IMR-90 (cell line): ENCODE measurements at regions of chr1 and their contacts with region 1.

Region 1: DNA sequence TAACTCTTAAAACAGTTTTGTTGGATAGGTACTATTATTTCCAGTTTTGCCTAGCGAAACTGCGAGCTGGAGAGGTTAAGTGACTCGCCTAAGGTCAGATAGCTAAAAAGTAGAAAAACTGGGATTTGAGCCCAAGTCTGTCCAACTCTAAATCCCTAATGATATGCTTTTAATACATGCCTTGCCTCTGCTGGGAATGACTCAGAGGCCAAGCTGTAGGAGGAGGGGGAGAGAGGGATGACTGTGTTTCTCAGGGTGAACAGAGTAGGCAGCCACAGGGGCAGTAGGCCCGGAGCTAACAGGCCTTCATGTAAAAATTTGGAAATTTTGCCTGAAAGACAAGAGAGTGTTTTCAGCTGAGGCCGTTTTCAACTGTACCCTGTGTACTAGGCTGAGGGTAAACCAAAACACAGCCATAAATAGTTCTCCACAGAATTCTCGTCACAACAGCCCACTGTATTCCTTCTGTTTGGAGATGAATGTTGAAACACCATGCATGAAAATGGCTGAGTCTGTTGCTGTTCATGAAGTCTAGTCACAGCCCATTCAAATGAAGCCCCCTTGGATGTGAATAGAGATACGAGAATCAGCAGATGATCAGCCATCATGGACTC is 107.5 kb upstream of the HOOK1 start:
- DNase-seq: peak; percentile 98
- ATAC-seq: peak; percentile 85
- H3K4me3 ChIP-seq: no peak overlapping the region
- H3K27ac ChIP-seq: peak overlapping the region; percentile 92
- H3K4me1 ChIP-seq: peaks cover 29% of the 10 kb centered on the region
- H3K27me3 ChIP-seq: no peaks in the 10 kb centered on the region
- CTCF ChIP-seq: no peak
- POLR2A ChIP-seq: no peak
- RAD21 ChIP-seq: peak; percentile 18; the same call in 1 of the 2 replicates

Region 2: DNA sequence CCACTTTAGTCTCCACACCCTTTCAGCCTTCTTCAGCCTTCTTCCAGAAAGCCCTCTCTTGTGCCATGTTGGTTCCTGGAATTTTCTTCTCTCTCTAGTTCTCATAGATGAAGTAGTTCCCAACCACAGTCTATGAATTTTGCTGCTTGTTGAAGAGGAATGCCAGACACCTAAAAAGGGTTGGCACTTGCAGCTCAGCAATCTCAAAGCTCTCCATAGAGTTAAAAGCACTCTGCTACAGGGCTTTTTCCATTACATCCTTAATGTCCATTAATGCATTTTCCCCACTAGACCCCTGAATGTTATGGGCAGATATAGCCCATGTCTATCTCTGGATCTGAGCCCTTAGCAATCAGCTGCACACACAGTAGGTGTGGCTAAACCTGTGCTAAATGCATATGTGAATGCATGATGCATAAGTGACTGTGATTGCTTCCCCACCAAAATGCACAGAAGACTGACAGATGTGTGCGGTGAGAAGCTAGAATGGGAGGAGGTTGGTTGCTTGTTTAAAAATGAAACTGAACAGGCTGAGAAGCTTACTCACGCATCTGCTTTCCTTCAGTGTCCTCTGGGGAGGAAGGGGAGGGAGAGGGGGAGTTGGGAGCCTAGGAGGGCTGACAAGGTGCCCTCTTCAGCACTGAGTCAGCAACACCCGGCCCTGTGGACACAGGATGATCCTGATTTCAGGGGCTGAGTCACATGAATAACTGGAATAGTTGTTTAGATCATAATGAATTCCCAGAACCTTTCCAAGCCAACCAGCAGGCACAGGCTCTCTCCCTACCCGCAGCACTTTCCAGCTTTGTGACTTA is 556.5 kb before region 1 on chr1:
- CTCF ChIA-PET with region 1: no interaction called
- POLR2A ChIA-PET with region 1: no interaction called
- dilution Hi-C with region 1: no loop called
- in situ Hi-C with region 1: loop called (anchors 5 kb)
- intact Hi-C with region 1: loop called (anchors 5 kb)
- DNase-seq: peak; percentile 100
- ATAC-seq: peak; percentile 94
- H3K4me3 ChIP-seq: peak overlapping the region; percentile 23; the same call in 1 of the 2 replicates
- H3K27ac ChIP-seq: peak overlapping the region; percentile 94
- H3K4me1 ChIP-seq: peaks cover 24% of the 10 kb centered on the region
- H3K27me3 ChIP-seq: no peaks in the 10 kb centered on the region
- CTCF ChIP-seq: 0 out of 2 replicates have a peak, but pooled peaks have one; percentile 5
- POLR2A ChIP-seq: no peak
- RAD21 ChIP-seq: no peak; the same call in 1 of the 2 replicates

Region 3: GRCh38 chr1:59375321-59376220 is 331.7 kb before region 1 on chr1:
- CTCF ChIA-PET with region 1: no interaction called
- POLR2A ChIA-PET with region 1: no interaction called
- dilution Hi-C with region 1: no loop called
- in situ Hi-C with region 1: no loop called
- intact Hi-C with region 1: loop called (anchors 5 kb)
- DNase-seq: peak; percentile 98
- ATAC-seq: peak; percentile 96
- H3K4me3 ChIP-seq: no peak overlapping the region
- H3K27ac ChIP-seq: peak overlapping the region; percentile 88
- H3K4me1 ChIP-seq: peaks cover 8% of the 10 kb centered on the region
- H3K27me3 ChIP-seq: no peaks in the 10 kb centered on the region
- CTCF ChIP-seq: no peak
- POLR2A ChIP-seq: no peak
- RAD21 ChIP-seq: no peak

Region 4: DNA sequence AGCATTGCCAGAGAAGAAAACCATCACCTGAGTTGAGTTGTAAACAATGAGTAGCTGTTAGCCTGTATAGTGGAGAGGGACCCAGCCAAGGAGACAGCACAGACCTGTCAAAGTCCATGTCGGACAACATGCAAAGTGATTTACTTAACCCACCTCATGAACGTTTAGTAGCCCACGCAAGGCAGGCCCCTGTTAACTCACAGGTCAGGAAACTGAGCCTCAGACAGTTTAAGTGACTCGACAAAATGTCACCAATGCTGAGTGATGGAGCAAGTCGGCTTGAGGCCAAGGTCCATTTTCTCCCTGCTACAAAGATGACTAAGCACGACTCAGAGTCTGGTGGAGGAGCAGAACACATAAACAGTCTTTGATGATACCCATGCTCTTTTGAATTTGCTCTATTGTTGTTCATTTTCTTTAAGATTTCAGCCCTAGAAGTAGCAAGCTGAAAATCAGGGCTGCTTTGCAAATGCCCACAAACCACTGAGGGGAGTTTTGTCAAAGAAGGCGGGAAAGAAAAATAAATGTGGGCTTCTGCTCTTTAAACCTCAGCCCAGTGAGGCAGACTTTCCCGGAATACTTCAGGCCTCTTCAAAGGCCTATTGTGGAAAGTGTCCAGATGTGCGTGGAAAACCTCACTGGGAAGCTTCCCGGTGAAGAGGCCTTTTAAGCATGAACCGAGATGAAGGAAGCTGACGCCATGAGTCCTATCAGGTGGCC is 23.6 kb after region 1 on chr1:
- CTCF ChIA-PET with region 1: no interaction called
- POLR2A ChIA-PET with region 1: interaction called, 3 read pairs
- dilution Hi-C with region 1: no loop called
- in situ Hi-C with region 1: no loop called
- intact Hi-C with region 1: loop called (anchors 2 kb)
- DNase-seq: peak; percentile 99
- ATAC-seq: peak; percentile 68
- H3K4me3 ChIP-seq: no peak overlapping the region
- H3K27ac ChIP-seq: peak overlapping the region; percentile 85
- H3K4me1 ChIP-seq: peaks cover 36% of the 10 kb centered on the region
- H3K27me3 ChIP-seq: no peaks in the 10 kb centered on the region
- CTCF ChIP-seq: no peak
- POLR2A ChIP-seq: peak; percentile 59; the same call in 1 of the 2 replicates
- RAD21 ChIP-seq: no peak

Region 5: GRCh38 chr1:59738152-59738551 is 30.9 kb after region 1 on chr1:
- CTCF ChIA-PET with region 1: interaction called, 5 read pairs
- POLR2A ChIA-PET with region 1: interaction called, 4 read pairs
- dilution Hi-C with region 1: no loop called
- in situ Hi-C with region 1: no loop called
- intact Hi-C with region 1: loop called (anchors 2 kb)
- DNase-seq: peak; percentile 93
- ATAC-seq: peak; percentile 64
- H3K4me3 ChIP-seq: no peak overlapping the region
- H3K27ac ChIP-seq: peak overlapping the region; percentile 96; the same call in 1 of the 2 replicates
- H3K4me1 ChIP-seq: peaks cover 22% of the 10 kb centered on the region
- H3K27me3 ChIP-seq: no peaks in the 10 kb centered on the region
- CTCF ChIP-seq: no peak
- POLR2A ChIP-seq: no peak
- RAD21 ChIP-seq: no peak